Activated CD4-positive, alpha-beta memory T cell treated with anti-CD3 and anti-CD28 coated beads for 36 hours (primary cell): ENCODE measurements at regions of chr20 and their contacts with region 1.

Region 1: GRCh38 chr20:1965520-1966351 is 28.1 kb downstream of the PDYN start:
- DNase-seq: peak; percentile 88
- H3K4me3 Mint-ChIP-seq: peak overlapping the region; percentile 24
- H3K27ac Mint-ChIP-seq: no peak overlapping the region
- H3K4me1 Mint-ChIP-seq: peaks cover 10% of the 10 kb centered on the region
- H3K27me3 Mint-ChIP-seq: peaks cover 20% of the 10 kb centered on the region

Region 2: GRCh38 chr20:1802385-1803060 is 163.2 kb before region 1 on chr20:
- CTCF ChIA-PET with region 1: no interaction called
- POLR2A ChIA-PET with region 1: no interaction called
- intact Hi-C with region 1: loop called (anchors 5 kb)
- DNase-seq: peak; percentile 56
- H3K4me3 Mint-ChIP-seq: peak overlapping the region; percentile 1
- H3K27ac Mint-ChIP-seq: no peak overlapping the region
- H3K4me1 Mint-ChIP-seq: peaks cover 10% of the 10 kb centered on the region
- H3K27me3 Mint-ChIP-seq: peaks cover 40% of the 10 kb centered on the region

Region 3: DNA sequence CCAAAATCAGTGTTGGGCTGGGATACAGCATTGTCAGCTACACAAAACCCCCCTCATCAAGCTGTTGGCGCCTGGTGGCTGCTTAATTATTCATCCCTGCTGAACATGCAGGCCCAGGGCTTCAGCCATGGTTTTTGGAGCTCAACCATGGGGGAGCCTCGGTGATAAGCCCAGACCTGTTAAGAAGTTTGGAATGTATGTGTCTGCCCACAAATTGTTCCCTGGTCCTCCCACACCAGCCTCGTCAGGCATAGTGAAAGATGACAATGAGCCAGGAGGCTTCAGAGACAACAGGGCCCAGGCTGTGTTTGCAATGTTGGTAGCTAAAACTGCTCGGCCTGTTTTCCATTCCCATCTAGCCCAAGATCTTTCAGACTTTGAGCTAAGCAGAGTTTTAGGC is 105.3 kb before region 1 on chr20:
- CTCF ChIA-PET with region 1: no interaction called
- POLR2A ChIA-PET with region 1: no interaction called
- intact Hi-C with region 1: no loop called
- DNase-seq: no peak
- H3K4me3 Mint-ChIP-seq: no peak overlapping the region
- H3K27ac Mint-ChIP-seq: no peak overlapping the region
- H3K4me1 Mint-ChIP-seq: no peaks in the 10 kb centered on the region
- H3K27me3 Mint-ChIP-seq: peaks cover 19% of the 10 kb centered on the region

Region 4: DNA sequence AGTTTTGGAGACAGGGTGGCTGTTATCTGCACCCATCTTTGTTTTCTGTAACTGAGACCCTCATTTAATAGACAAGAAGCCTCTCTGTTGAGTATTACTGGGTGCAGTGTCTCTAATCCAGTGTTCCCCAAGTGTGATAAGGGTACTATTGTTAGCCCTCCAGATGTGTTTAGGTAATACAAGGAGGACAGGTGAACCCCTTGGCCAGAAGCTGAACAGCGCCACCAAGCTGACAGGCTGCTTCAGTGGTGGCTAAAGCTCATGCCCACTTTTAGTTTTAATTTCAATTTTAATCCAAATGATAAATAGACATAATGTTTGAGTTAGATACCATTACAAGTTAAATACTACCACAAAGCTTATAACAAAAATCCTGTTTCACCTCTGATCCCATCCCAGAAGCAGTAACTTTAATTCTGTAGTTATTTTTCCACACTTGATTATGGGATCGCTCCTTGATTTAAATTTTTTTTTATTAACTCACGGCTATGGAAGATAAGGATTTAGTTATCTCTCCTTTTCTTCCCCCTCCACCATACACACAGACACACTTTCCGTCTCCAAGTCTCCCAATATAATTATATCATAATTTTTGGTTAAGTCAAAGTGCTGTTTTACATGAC is 127.5 kb after region 1 on chr20:
- CTCF ChIA-PET with region 1: interaction called, 13 read pairs
- POLR2A ChIA-PET with region 1: no interaction called
- intact Hi-C with region 1: no loop called
- DNase-seq: peak; percentile 53
- H3K4me3 Mint-ChIP-seq: no peak overlapping the region
- H3K27ac Mint-ChIP-seq: no peak overlapping the region
- H3K4me1 Mint-ChIP-seq: no peaks in the 10 kb centered on the region
- H3K27me3 Mint-ChIP-seq: peaks cover 32% of the 10 kb centered on the region

Region 5: DNA sequence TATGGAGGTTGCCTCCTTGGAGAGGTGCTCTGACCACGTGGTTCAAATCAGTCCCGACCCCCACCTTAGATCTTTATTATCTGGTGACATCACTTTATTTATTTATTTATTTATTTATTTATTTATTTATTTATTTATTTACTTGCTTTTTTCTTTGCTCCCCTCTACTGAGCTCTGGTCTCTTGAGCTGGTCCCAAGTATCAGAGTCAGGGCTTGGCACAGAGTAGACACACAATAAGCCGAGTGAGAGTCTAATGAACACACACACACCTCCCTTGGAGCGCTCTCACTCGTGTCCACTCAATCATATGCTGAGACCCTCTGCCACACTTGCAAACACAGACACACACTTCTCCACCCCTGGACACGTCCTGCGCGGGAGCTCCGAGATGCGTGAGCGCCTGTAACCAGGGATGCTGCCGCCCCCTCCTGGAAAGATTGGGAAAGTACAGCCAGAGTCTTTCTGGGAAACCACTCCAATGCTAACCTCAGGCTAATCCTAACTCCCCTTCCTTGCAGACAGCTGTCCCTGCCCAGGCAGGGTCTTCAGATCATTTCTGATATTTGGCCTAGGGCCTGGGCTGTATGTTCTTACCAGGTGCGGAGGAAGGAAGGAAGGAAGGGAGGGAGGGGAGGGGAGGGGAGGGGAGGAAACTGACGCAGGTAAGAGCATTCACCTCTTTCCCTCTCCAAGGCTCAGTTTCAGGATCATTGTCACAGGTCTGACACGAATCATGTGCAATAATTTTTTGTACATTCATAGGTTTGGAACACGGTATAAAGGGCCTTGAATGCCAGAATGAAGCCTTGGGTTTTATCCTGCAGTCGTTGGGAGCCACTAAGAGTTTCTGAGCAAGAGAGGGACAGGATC is 206.8 kb after region 1 on chr20:
- CTCF ChIA-PET with region 1: interaction called, 101 read pairs
- POLR2A ChIA-PET with region 1: no interaction called
- intact Hi-C with region 1: loop called (anchors 1 kb)
- DNase-seq: peak; percentile 79
- H3K4me3 Mint-ChIP-seq: no peak overlapping the region
- H3K27ac Mint-ChIP-seq: no peak overlapping the region
- H3K4me1 Mint-ChIP-seq: peaks cover 3% of the 10 kb centered on the region
- H3K27me3 Mint-ChIP-seq: peaks cover 9% of the 10 kb centered on the region

Region 6: DNA sequence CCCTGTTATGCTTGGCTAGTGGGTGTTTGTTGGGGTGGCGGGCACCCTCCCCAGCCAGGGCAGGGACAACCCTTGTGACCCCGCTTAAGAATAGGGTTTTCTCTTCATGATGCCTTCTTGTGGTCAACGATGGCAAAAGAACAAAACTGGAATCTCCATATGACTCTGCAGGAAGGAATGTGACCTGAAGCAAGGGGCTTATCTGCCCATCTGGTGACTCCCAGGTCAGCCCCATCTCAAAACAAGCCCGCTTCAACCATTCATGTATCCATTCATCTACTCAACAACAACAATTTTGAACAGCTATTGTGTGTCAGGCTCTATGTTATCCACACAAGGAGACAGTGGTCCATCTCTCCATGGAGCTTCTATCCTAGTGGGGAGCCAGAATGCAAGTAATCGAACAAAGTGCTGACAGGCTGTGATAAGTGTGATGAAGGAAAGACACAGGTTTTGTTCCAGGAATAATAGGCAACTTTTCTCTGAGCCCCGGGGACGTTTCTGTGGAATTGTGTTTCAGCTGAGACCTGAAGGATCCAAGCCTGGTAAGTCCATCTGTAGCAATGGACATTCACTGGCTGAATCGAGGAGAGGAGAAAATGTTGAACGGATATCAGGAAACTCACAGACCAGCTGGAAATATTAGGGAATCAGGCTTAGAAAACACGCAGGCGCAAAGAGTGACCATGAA is 384.2 kb after region 1 on chr20:
- CTCF ChIA-PET with region 1: no interaction called
- POLR2A ChIA-PET with region 1: no interaction called
- intact Hi-C with region 1: loop called (anchors 5 kb)
- DNase-seq: no peak
- H3K4me3 Mint-ChIP-seq: no peak overlapping the region
- H3K27ac Mint-ChIP-seq: no peak overlapping the region
- H3K4me1 Mint-ChIP-seq: peaks cover 2% of the 10 kb centered on the region
- H3K27me3 Mint-ChIP-seq: peaks cover 21% of the 10 kb centered on the region